ENCODE measurements at regions of chr1 and their contacts with region 1.

Region 1: DNA sequence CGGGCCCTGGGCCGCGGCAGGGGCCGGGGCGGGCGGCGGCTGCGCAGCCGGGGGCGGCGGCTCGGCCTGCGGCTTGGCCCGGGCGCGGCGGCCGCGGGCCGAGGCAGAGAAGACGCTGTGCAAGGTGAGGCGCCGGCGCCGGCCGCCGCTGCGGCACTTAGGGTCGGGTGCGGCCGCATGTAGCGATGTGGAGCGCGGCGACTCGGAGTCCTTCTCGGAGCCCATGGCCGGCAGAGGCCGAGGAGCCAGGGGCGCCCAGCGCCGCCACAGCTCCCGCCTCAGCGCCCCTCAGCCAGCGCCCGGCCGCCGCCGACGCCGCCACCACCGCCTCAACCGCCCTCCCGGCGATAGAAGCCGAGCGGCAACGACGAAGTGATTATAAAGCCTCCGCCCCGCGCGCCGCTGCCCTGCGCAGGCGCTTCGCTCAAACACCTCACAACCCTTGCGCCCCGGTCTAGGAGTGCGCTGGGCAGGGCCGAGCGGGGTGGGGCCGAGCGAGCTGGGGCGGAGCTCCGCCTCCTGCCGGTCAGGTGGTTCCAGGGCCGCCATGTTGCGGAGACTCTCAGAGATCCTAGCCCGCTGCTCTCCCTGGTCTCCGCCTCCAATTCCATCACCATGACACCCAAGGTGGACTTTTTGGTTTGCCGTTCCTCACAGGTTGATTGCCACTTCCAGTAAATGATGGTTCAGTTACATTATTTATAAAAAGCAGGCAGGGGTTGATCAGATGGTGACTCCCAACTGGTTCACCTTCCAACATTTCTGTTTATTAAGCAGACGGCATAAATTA is at the start of gene RNF19B:
- DNase-seq: peak; percentile 95
- ATAC-seq: peak; percentile 91
- H3K4me3 ChIP-seq: peak within 1 kb of the TSS; percentile 98
- H3K27ac ChIP-seq: peak within 1 kb of the TSS; percentile 46
- H3K4me1 ChIP-seq: peaks cover 32% of the 10 kb centered on the region
- H3K27me3 ChIP-seq: no peaks in the 10 kb centered on the region
- CTCF ChIP-seq: no peak
- total RNA-seq, gene RNF19B: 17.9 and 21.3 TPM in 2 replicates

Region 2: GRCh38 chr1:32953495-32953894 is 11.2 kb before region 1 on chr1:
- CTCF ChIA-PET with region 1: interaction called, 11 read pairs
- POLR2A ChIA-PET with region 1: interaction called, 11 read pairs
- intact Hi-C with region 1: loop called (anchors 1 kb)
- DNase-seq: peak; percentile 91
- ATAC-seq: peak; percentile 86
- H3K4me3 ChIP-seq: peak overlapping the region; percentile 3; the same call in 1 of the 2 replicates
- H3K27ac ChIP-seq: peak overlapping the region; percentile 93
- H3K4me1 ChIP-seq: peaks cover 38% of the 10 kb centered on the region
- H3K27me3 ChIP-seq: no peaks in the 10 kb centered on the region
- CTCF ChIP-seq: no peak

Region 3: DNA sequence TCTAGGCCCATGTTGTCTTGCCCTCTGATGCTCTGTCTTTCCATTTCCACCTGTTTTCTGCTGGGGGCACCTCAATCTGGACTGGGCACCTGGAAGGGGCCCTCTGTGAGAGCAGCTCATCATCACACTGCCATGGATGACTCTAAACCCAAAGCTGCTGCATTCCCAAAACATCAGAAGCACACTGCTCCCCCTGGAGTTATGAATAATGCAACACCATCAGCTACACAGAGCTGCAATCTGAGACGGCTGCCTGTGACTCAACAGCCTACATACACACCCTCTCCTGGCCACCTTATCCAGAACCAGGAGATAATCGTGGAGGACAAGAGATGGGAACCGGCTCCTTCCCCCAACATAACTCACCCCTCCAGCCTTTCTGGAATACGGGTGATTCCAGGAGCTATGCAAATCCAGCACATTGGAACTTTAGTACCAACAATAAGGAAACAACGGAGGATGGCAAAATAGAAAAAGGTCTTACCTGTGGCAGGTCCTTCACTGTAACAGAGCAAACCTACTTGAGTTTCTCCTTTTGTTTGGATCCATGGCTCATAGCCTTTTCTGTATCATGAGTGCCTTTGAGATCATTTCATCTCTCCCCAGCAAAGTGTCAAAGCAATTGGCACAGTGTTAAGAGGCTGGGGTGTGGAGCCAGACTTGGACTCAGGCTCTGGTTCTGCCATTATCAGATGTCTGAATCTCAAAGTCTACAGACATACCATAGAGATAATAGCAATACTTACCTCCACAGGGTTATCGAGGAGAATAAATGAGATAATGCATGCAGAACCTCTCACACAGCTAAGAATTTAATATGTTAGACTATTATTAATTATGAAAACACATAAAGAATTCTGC is 42.8 kb after region 1 on chr1:
- CTCF ChIA-PET with region 1: interaction called, 8 read pairs
- POLR2A ChIA-PET with region 1: interaction called, 4 read pairs
- intact Hi-C with region 1: loop called (anchors 5 kb)
- DNase-seq: peak; percentile 93
- ATAC-seq: peak; percentile 97
- H3K4me3 ChIP-seq: no peak overlapping the region
- H3K27ac ChIP-seq: peak overlapping the region; percentile 28
- H3K4me1 ChIP-seq: peaks cover 40% of the 10 kb centered on the region
- H3K27me3 ChIP-seq: no peaks in the 10 kb centered on the region
- CTCF ChIP-seq: peak; percentile 86

Region 4: GRCh38 chr1:33088119-33088906 is 123.7 kb after region 1 on chr1:
- CTCF ChIA-PET with region 1: no interaction called
- POLR2A ChIA-PET with region 1: no interaction called
- intact Hi-C with region 1: no loop called
- DNase-seq: no peak
- ATAC-seq: no peak
- H3K4me3 ChIP-seq: no peak overlapping the region
- H3K27ac ChIP-seq: no peak overlapping the region
- H3K4me1 ChIP-seq: peaks cover 4% of the 10 kb centered on the region; the same call in 1 of the 2 replicates
- H3K27me3 ChIP-seq: no peaks in the 10 kb centered on the region
- CTCF ChIP-seq: no peak

Region 5: DNA sequence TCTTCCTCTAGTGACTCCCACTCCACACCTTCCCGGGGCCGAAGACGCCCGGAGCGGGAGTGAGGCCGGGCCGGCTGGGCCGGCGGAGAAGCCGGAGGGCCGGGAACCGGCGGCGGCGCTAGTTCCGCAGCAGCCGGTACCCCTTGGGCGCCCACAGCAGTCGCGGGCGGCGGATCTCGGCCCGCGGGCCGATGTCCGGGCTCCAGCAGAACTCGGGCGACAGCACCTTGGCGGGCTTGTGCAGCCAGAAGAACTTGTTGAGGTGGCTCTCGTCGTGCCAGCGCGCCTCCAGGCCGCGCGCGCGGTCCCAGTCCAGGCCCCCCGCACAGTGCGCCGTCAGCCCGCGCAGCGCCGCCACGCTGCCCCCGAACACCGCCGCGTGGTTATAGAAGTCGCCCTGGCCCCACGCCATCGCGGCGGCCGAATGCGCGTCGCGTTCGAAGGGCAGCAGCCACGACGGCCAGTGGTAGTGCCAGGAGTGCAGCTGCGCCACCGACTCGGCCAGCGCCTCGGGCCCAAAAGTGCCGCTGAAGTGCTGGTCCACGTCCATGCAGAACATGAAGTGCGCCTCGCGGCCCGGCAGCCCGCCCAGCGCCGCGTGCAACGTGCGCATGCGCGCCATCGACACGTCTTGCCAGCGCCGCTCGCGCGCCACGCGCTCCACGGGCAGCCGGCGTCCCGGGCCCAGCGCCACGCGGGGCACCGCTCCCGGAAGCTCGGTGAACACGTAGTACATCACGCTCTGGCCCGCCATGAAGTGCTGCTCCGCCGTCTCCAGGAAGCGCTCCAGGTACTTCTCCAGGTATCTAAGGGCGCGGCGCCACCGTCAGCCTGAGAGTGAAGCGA is 342.2 kb after region 1 on chr1:
- CTCF ChIA-PET with region 1: no interaction called
- POLR2A ChIA-PET with region 1: no interaction called
- intact Hi-C with region 1: no loop called
- DNase-seq: no peak
- ATAC-seq: no peak
- H3K4me3 ChIP-seq: no peak overlapping the region
- H3K27ac ChIP-seq: no peak overlapping the region
- H3K4me1 ChIP-seq: no peaks in the 10 kb centered on the region
- H3K27me3 ChIP-seq: no peaks in the 10 kb centered on the region
- CTCF ChIP-seq: no peak

Measured in PC-3 (cell line).